ENCODE measurements at regions of chrX and their contacts with region 1.

Region 1: DNA sequence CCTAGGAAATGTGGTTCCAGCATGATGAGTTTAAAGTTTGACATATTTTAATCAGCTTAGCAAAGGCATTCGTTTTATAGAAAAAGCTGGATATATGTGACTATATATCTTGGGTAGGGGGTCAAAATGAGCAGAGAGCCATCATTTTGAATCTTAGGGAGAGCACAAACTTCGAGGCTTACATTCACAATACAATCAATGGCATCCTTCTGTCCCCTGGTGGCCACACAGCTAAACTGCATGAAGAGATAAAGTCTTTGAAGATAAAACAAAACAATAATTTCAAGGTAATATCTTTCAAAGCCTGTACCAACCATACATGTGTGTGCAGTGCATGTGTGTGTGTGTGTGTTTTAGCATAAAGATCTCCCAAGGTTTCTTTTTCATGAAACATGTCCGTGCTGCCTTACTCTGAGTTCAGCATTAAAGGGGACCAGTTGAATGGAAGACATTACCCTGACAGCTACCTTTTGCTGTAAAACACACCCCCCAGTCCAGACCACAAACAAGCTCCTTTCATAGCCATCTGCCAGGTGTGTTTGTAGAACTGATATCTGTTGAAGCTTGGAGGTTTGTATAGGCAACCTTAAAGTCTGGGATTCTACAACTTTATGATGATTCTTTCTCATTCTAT is 22.0 kb downstream of the DYNLT3 start:
- DNase-seq: peak; percentile 73
- H3K4me3 Mint-ChIP-seq: no peak overlapping the region
- H3K27ac Mint-ChIP-seq: peak overlapping the region; percentile 12
- H3K4me1 Mint-ChIP-seq: peaks cover 28% of the 10 kb centered on the region
- H3K27me3 Mint-ChIP-seq: no peaks in the 10 kb centered on the region

Region 2: DNA sequence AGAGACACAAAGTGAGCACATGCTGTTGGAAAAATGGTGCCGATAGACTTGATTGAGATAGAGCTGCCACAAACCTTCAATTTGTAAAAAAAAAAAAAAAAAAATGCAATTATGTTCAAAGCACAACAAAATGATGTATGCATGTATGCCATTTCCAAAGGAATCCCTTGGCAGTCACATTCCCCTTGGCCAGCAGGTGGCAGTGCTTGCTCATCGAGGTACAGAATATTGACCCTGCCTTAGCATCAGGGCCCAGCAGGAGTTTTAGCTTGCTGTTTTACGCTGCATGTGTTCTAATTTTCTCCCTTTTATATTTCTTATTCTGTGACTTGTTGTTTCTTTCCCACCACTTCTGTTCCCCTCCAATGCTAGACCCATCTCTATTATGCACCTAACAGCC is 80.0 kb before region 1 on chrX:
- CTCF ChIA-PET with region 1: interaction called, 172 read pairs
- DNase-seq: peak; percentile 86
- H3K4me3 Mint-ChIP-seq: no peak overlapping the region
- H3K27ac Mint-ChIP-seq: peak overlapping the region; percentile 45
- H3K4me1 Mint-ChIP-seq: peaks cover 13% of the 10 kb centered on the region
- H3K27me3 Mint-ChIP-seq: no peaks in the 10 kb centered on the region

Region 3: DNA sequence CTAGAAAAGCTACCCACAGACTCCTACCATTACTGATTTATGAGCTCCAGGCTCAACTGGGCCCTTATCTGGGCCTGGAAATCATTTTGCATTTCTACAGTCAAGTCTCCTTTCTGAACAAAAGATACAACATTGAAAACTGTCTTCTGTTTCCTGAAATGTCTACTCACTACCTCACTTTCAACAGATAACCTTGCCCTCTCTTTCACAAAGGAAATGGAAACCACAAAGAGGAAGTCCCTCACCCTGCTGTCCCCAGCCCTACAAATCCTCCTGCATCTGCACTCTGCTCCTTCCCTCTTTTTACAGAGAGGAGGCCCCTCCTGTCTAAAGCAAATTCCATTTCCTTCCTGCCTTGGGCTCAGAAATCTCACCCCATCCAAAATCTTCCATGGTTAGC is 70.3 kb before region 1 on chrX:
- CTCF ChIA-PET with region 1: interaction called, 10 read pairs
- DNase-seq: peak; percentile 50
- H3K4me3 Mint-ChIP-seq: no peak overlapping the region
- H3K27ac Mint-ChIP-seq: no peak overlapping the region
- H3K4me1 Mint-ChIP-seq: peaks cover 21% of the 10 kb centered on the region
- H3K27me3 Mint-ChIP-seq: no peaks in the 10 kb centered on the region

Region 4: DNA sequence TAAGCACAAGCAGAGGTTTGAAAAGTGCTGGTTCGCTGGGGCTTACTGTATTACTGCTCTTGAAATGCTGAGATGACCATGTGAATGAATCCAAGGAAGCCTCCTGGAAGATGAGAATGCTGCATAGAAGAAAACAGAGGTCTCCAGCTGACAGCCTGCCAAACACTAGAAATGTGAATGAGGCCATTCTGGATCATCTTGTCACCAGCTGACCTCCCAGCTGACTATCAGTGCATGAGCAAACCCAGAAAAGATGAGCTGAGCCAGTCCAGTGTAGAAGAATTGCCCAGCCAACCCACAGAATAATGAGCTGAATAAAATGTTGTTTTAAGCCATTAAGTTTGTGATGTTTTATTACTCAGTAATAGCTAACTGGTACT is 71.2 kb after region 1 on chrX:
- CTCF ChIA-PET with region 1: no interaction called
- DNase-seq: no peak
- H3K4me3 Mint-ChIP-seq: no peak overlapping the region
- H3K27ac Mint-ChIP-seq: no peak overlapping the region
- H3K4me1 Mint-ChIP-seq: no peaks in the 10 kb centered on the region
- H3K27me3 Mint-ChIP-seq: no peaks in the 10 kb centered on the region

Region 5: GRCh38 chrX:38126179-38126578 is 300.9 kb after region 1 on chrX:
- CTCF ChIA-PET with region 1: no interaction called
- DNase-seq: no peak
- H3K4me3 Mint-ChIP-seq: no peak overlapping the region
- H3K27ac Mint-ChIP-seq: no peak overlapping the region
- H3K4me1 Mint-ChIP-seq: no peaks in the 10 kb centered on the region
- H3K27me3 Mint-ChIP-seq: no peaks in the 10 kb centered on the region